AG04449 (cell line): ENCODE measurements at regions of chr14 and their contacts with region 1.

Region 1: DNA sequence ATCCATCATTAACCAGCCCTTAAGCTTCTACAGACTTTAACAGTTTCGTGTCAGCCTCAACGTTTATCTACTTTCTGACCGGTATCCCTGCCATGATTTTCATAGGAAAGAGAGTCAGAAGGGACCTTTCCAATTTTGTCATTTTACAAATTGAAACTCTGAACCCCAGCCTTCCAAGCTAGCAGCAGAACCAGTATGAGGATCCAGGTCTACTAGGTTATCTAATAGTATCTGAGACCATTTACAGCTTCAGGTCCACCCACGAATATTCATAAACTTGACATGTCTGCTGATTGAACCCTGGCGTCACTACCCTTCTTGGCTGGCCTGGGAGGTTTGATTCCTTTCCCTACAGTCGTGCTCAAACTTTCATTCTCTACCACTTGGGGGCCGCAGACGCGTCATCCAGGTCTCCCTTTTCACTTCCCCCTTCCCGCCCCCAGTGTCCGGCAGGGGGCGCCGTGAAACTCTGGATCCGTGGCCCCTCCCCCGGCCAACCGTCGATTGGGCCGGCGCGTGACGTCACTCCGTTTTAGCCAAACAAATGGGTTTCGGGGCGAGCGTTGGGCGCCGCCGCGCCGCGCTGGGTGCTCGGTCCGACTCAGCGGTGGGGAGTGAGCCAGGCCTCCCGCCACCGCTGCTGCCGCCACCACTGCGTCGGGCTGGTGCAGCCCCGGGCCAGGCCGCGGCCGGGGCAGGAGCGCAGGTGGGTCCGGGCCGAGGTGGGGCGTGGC is at the start of gene FBXO34:
- DNase-seq: peak; percentile 59
- H3K4me3 ChIP-seq: peak within 1 kb of the TSS; percentile 95
- CTCF ChIP-seq: peak; percentile 100

Region 2: DNA sequence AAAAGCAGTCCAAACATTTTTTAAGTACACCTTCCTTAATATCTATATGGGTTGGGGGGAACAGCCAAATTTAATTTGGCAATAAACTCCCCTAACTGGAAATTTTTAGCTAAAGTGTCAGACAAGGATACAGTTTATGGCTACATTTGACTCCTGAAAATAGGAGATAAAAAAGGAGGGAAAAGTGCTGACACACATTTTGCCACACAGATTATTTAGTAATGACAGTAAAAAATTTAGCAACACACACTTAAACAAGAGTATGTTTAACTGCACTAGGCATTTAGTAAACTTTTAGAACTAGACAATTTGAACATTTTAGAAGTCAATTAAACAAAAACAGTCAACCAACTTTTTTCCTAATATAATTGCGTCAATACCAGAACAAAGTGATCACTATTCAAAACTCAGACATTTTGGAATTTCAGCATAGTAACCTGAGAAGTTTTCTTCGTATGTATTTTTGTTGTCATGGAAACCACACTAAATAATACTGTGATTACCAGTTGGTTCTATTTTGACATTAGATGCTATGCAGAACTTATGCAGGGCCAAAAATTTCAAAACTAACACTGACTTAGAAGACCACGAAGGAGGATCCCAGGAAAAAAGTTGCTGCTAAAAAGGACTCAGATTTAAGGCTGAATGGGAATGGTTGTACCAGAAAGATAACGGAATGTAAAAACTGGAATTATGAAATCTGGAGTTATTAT is 795.7 kb before region 1 on chr14:
- CTCF ChIA-PET with region 1: no interaction called
- POLR2A ChIA-PET with region 1: no interaction called
- DNase-seq: no peak
- H3K4me3 ChIP-seq: no peak overlapping the region
- CTCF ChIP-seq: no peak

Region 3: DNA sequence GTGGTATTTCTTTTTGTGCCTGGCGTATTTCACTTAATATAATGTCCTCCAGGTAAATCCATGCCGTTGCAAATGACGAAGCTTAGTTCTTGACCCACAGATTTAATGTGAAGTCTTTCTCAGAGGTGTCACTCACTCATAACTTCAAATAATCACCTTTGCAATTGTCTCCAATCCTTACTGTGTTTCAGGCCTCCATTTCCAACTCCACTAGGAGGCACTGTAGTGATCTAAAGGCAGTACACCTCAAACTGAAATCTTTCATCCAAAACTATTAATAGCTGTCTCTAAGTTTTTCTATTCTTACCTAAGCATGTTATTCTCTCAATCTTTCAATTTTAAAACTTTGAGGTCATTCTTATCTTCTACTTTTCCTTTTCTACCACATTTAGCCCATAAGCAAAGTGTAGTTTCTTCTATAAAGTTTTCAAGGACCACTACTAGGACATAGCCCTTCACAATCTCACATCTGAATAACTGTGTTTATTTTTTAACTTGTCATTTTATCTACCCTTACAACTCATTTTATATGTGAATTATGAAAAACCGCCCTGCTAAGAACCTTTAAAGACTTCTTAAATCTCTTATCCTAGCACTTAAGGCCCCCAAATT is 25.2 kb before region 1 on chr14:
- CTCF ChIA-PET with region 1: interaction called, 101 read pairs
- POLR2A ChIA-PET with region 1: no interaction called
- DNase-seq: no peak
- H3K4me3 ChIP-seq: no peak overlapping the region
- CTCF ChIP-seq: peak; percentile 60

Region 4: DNA sequence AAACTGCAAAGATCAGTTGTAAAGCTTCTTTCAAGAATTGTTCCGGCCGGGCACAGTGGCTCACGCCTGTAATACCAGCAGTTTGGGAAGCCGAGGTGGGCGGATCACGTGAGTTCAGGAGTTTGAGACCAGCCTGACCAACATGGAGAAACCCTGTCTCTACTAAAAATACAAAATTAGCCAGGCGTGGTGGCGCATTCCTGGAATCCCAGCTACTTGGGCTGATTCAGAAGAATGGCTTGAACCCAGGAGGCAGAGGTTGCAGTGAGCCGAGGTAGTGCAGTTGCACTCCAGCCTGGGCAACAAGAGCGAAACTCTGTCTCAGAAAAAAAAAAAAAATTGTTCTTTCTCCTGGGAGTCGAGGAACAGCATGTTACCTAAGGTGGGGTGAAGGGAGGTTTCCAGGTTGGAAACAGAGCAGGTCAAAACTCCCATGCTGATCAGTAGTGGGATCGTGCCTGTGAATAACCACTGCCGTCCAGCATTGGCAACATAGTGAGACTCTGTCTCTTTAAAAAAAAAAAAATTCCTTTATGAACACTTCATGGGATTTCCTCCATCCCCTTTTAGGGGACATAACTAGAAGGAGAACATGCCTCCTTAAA is 14.2 kb after region 1 on chr14:
- CTCF ChIA-PET with region 1: interaction called, 48 read pairs
- POLR2A ChIA-PET with region 1: no interaction called
- DNase-seq: no peak
- H3K4me3 ChIP-seq: no peak overlapping the region
- CTCF ChIP-seq: no peak

Region 5: DNA sequence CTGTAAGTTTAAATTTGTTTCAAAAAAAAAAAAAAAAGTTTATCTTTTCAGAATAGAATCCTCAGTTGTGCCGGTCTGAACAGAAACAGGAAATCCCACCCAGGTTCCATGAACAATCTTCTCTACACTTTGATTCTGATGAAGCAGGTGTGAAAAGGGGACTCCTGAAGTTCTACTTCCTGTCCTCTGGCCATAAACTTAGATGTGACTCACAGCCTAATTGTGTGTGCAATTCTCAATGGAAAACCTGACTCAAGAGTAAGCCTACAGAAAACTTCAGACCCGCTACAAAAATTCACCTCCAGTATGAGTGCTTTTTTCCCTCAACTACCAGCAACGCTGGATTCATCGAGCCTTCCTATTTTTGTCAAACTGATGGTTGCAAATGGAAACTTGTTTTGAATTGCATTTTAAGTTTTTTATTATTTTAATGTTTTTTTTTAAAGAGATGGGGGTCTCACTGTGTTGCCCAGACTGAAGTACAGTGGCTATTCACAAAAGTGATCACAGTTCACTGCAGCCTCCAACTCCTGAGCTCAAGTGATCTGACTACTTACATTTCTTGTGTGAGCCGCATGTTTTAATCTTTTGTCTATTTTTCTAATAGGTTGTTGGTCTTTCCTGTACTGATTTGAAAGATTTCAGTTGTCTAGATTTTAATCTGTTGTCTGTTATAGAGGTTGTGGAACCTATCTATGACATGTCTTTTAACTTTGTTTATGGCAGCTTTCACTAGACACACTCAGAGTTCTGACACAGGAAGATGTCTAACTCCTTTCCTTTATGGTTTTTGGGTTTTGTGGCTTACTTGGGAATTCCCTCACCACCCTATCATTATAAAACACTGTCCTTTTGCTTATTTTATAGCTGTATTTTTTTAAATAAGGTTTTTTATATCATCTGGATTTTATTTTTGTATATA is 103.0 kb after region 1 on chr14:
- CTCF ChIA-PET with region 1: interaction called, 10 read pairs
- POLR2A ChIA-PET with region 1: no interaction called
- DNase-seq: no peak
- H3K4me3 ChIP-seq: no peak overlapping the region
- CTCF ChIP-seq: no peak

Region 6: GRCh38 chr14:55430024-55430690 is 159.2 kb after region 1 on chr14:
- CTCF ChIA-PET with region 1: interaction called, 59 read pairs
- POLR2A ChIA-PET with region 1: no interaction called
- DNase-seq: no peak
- H3K4me3 ChIP-seq: no peak overlapping the region
- CTCF ChIP-seq: peak; percentile 44